HCT116 (cell line): ENCODE measurements at regions of chr1 and their contacts with region 1.

Region 1: DNA sequence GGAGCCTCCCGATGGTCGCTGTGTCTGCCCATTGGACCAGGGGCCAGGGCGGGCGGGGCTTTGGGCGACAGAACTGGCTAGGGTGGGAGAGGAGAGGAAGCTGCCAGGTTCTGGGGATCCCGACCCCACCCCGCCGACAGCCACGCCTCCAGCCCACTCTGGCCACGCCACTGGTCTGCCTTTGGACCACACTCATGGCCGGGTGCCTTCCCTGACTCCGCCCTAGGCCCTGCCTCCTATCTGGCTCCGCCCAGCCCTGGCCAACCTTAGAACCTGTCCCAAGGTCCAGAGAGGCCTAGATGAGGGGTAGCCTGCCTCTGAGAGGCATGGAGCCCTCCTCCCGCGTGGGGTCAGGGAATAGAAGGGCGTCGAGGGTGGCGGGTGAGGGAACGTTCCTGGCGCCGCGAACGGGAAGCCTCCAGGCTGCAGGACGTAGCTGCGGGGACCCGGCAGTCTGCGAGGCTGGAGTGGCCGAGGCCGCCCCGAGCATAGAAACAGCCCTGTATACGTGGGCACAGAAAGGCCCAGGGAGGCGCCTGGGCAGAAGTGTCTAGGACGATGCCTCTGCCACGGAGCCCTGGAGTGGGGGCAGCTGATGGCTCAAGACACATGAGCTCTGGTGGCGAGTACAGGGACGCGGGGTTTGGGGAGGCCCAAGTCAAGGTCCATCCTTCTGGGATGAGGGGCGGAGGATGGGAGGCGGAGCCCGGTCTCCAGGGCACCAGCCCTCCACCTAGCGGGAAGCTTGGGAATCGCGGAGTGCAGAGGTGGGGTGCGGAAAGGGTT is 11.5 kb upstream of the COL16A1 start:
- DNase-seq: peak; percentile 75
- ATAC-seq: peak; percentile 94
- H3K4me3 ChIP-seq: peak overlapping the region; percentile 46 to 65
- H3K27ac ChIP-seq: peak overlapping the region; percentile 56
- H3K4me1 ChIP-seq: peaks cover 23 to 51% of the 10 kb centered on the region in 2 experiments
- H3K27me3 ChIP-seq: peaks cover 6% of the 10 kb centered on the region; the same call in 1 of the 2 replicates
- CTCF ChIP-seq: peak; percentile 55 to 96 (median 74)
- POLR2A ChIP-seq: peak; percentile 62
- RAD21 ChIP-seq: peak; percentile 54

Region 2: DNA sequence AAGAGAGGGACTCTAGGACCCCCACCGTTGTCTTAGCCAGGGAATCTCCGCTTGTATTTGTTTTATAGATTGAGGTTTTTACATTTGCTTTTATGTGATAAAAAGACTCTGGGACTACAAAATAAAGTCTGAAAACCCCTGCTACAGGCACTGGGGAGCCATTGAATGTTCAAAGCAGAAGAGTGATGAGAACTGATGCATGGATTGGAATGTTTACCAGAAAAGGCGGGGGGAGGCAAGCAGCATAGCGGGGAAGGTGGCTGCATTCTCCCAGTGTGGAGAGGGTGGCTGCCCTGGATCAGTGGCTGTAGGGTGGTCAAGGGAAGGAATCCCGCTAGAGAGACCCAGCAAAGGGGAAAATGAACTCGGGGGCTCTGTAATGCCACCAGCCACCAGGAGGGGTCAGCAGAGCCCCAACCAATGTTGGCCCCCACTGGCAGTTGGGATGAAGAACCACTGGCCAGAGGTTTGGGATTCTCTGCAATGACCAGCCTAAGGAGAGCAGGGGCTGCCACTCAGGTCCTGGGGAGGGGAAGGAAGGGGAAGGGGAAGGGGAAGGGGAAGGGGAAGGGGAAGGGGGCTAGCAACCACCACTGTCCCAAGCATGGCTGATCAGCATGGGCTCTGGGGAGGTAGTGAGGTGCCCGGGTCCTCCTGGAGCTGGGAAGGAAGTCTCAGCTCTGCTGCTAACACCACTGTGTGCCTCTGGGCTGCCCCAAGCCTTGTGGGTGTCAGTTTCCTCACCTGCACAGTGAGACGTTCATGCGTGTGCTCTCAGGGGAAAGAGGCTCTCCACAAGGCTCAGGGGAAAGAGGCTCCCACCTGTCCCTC is 51.4 kb before region 1 on chr1:
- CTCF ChIA-PET with region 1: interaction called, 17 read pairs
- POLR2A ChIA-PET with region 1: no interaction called
- RAD21 ChIA-PET with region 1: interaction called in 1 of 2 experiments, 3 read pairs
- intact Hi-C with region 1: loop called (anchors 2 kb)
- DNase-seq: peak; percentile 13
- ATAC-seq: peak; percentile 79
- H3K4me3 ChIP-seq: no peak overlapping the region
- H3K27ac ChIP-seq: no peak overlapping the region
- H3K4me1 ChIP-seq: peaks cover 9 to 12% of the 10 kb centered on the region in 2 experiments
- H3K27me3 ChIP-seq: no peaks in the 10 kb centered on the region
- CTCF ChIP-seq: peak; percentile 90 to 95 (median 93)
- POLR2A ChIP-seq: no peak
- RAD21 ChIP-seq: peak; percentile 98

Region 3: DNA sequence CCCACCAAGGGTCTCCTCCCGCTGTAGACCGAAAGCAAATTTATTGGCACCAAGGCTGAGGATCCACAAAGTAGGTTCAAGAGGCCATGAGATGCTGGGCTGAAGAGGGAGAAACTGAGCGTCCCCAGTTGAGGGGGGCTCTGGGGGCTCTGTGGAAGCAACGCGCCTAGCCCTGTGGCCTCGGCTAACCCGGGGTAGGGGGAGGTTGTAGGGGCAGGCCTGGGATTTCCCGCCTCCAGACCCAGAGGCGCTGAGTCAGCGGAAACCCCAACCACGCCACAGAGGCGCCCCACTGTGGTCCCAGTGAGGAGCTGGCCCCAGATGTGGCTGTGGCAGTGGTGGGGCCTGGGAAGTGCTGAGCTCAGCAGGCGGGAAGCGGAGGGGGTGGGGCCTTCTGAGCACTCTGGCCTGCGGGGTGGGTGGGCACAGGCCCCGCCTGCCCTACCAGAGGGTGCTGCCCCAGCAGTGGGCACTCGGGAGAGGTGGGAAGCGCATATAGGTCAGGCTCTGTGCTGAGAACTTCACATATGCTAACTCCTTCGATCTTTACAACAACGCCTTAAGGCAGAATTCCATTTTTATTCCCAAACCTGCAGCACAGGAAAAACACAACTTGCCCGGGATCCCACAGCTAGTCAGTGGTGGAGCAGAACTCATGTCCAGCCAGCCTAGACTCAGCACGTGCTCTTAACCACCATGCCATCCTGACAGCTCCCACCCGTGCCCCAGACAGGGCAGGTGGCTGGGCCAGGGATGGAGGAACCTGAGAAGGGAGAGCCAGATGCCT is 10.0 kb before region 1 on chr1:
- CTCF ChIA-PET with region 1: interaction called, 17 read pairs
- POLR2A ChIA-PET with region 1: no interaction called
- RAD21 ChIA-PET with region 1: no interaction called
- intact Hi-C with region 1: no loop called
- DNase-seq: no peak
- ATAC-seq: peak; percentile 72
- H3K4me3 ChIP-seq: no peak overlapping the region
- H3K27ac ChIP-seq: no peak overlapping the region
- H3K4me1 ChIP-seq: peaks cover 20 to 49% of the 10 kb centered on the region in 2 experiments
- H3K27me3 ChIP-seq: no peaks in the 10 kb centered on the region
- CTCF ChIP-seq: peak; percentile 14 to 56 (median 19); a peak in 2 of 6 replicates
- POLR2A ChIP-seq: no peak
- RAD21 ChIP-seq: peak; percentile 81

Region 4: DNA sequence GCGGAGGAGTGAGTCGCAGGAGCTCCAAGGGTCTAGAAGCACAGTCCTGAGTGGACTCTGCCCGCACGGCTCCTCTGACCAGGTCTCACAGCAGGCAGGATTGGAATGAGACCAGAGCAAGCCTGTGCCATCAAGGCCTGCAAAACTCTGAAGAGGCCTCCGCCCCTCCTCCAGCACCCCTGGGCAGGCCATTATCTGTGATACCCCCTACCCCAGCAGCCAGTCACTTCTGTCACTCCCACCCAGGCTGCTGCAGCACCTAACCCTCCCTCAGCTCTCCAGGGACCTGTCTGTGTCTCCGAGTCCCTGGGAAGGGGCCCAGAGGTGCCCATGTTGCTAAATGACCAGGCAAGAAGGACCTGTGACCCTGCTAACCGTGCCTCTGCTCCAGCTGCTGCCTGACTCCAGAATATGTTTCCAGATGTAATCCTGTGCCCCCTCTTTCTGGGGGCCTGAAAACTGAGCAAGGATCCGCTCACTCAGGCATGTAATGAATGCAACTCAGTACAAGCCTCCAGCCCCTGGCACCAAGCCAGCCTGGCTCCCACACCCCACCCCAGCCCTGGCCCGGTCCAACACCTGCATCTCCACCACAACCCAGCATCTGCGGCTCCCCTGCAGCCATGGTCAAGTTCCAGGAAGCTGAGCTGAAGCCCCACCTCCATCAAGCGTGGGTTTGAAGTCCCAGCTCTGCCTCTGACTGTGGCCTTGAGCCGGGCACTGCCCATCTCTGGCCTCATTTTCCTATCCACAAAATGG is 10.7 kb after region 1 on chr1:
- CTCF ChIA-PET with region 1: interaction called, 14 read pairs
- POLR2A ChIA-PET with region 1: interaction called, 3 read pairs
- RAD21 ChIA-PET with region 1: no interaction called
- intact Hi-C with region 1: no loop called
- DNase-seq: no peak
- ATAC-seq: no peak
- H3K4me3 ChIP-seq: no peak overlapping the region
- H3K27ac ChIP-seq: no peak overlapping the region
- H3K4me1 ChIP-seq: no peaks in the 10 kb centered on the region; a peak in 1 of 4 replicates
- H3K27me3 ChIP-seq: no peaks in the 10 kb centered on the region; the same call in 1 of the 2 replicates
- CTCF ChIP-seq: no peak
- POLR2A ChIP-seq: no peak
- RAD21 ChIP-seq: no peak

Region 5: DNA sequence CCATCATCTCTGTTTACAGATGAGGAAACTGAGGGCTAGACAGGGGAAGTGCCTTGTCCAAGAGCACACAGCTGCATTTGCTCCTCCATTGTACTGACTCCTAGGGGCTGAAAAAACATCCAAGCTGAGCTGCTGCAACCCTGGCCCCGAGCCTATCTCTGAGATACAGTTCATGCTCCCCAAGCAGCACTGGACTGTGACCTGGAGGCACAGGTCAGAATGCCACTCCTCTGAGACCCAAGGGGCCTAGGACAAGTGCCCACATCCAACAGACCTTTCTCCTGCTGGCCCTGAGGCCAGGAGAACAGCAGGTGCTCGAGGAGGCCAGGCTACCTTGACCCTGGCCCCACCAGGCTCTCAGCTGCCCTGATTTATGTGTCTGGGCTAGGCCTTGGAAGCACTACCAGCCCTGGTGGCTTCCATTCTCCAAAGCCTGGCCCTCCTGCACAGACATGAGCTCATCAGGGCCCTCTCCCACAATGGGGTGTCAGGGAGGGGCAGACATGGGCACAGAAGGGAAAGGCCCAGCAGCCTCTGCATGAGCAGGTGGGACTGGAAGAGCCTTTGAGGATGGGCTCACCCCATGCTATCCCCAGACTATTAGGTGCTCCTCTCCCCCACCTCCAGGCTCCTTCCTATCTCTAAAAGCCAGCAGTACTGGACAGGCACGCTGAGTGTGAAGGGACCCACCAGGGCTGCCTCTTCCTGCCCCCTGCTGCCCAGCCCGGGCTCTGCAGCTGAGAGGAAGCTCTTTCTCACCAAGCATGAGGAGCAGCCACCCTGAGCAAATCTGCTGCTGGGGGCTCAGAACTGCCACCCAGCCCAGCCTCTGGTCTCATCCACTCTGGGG is 30.0 kb after region 1 on chr1:
- CTCF ChIA-PET with region 1: interaction called, 18 read pairs
- POLR2A ChIA-PET with region 1: no interaction called
- RAD21 ChIA-PET with region 1: interaction called in 1 of 2 experiments, 5 read pairs
- intact Hi-C with region 1: no loop called
- DNase-seq: no peak
- ATAC-seq: peak; percentile 95
- H3K4me3 ChIP-seq: no peak overlapping the region
- H3K27ac ChIP-seq: no peak overlapping the region
- H3K4me1 ChIP-seq: peaks cover 7 to 8% of the 10 kb centered on the region in 2 experiments; a peak in 3 of 4 replicates
- H3K27me3 ChIP-seq: no peaks in the 10 kb centered on the region
- CTCF ChIP-seq: peak; percentile 73 to 83 (median 80); a peak in 5 of 6 replicates
- POLR2A ChIP-seq: no peak
- RAD21 ChIP-seq: peak; percentile 82